MCF 10A (cell line): ENCODE measurements at regions of chr5 and their contacts with region 1.

Region 1: GRCh38 chr5:82564963-82565362 is 286.8 kb upstream of the RPS23 start:
- DNase-seq: no peak
- H3K4me3 Mint-ChIP-seq: no peak overlapping the region
- H3K27ac Mint-ChIP-seq: no peak overlapping the region
- H3K4me1 Mint-ChIP-seq: no peaks in the 10 kb centered on the region
- H3K27me3 Mint-ChIP-seq: no peaks in the 10 kb centered on the region
- CTCF ChIP-seq: no peak

Region 2: DNA sequence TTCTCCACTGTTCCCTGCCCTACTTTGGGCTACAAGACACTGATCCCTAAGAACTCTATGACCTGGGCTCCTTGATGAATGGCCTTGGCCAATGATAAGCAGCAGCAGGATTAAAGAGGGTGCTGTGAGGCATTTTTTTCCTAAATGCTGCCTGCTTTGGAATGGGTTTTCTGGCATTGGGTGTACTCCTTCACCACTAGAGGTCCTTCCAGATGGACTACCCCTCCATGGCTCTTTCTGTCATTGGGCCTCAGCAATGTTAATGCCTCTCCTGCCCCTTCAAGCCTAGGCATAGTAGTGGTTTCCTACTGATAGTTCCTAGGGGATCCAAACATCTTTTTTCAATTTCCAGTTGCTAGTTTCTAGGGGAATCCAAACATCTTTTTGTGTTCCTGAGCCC is 32.5 kb after region 1 on chr5:
- CTCF ChIA-PET with region 1: no interaction called
- POLR2A ChIA-PET with region 1: no interaction called
- intact Hi-C with region 1: loop called (anchors 1 kb)
- DNase-seq: no peak
- H3K4me3 Mint-ChIP-seq: no peak overlapping the region
- H3K27ac Mint-ChIP-seq: no peak overlapping the region
- H3K4me1 Mint-ChIP-seq: no peaks in the 10 kb centered on the region
- H3K27me3 Mint-ChIP-seq: no peaks in the 10 kb centered on the region
- CTCF ChIP-seq: no peak